Gastrocnemius medialis (tissue), 4 donors: ENCODE measurements at regions of chr7 and their contacts with region 1.

Region 1: GRCh38 chr7:142482891-142483658 is 225.2 kb upstream of the PRSS58 start:
- DNase-seq: no peak
- ATAC-seq: peak; percentile 49 to 50
- H3K4me3 ChIP-seq: no peak overlapping the region
- H3K27ac ChIP-seq: no peak overlapping the region
- H3K4me1 ChIP-seq: peaks cover 0 to 6% of the 10 kb centered on the region in 2 donors
- H3K27me3 ChIP-seq: no peaks in the 10 kb centered on the region
- CTCF ChIP-seq: peak in 4 of 5 experiments; percentile 39 to 73 (median 60)
- POLR2A ChIP-seq: no peak

Region 2: GRCh38 chr7:142357953-142358520 is 125.0 kb before region 1 on chr7:
- in situ Hi-C with region 1: loop called in 2 of 4 experiments (anchors 5 to 10 kb)
- intact Hi-C with region 1: loop called (anchors 10 kb)
- DNase-seq: peak in 1 of 2 donors; percentile 33
- ATAC-seq: peak; percentile 66 to 87
- H3K4me3 ChIP-seq: no peak overlapping the region
- H3K27ac ChIP-seq: peak overlapping the region in 1 of 4 donors; percentile 42
- H3K4me1 ChIP-seq: peaks cover 4 to 9% of the 10 kb centered on the region in 2 donors
- H3K27me3 ChIP-seq: no peaks in the 10 kb centered on the region
- CTCF ChIP-seq: peak; percentile 66 to 86 (median 77)
- POLR2A ChIP-seq: no peak

Region 3: GRCh38 chr7:142385491-142386340 is 97.4 kb before region 1 on chr7:
- in situ Hi-C with region 1: no loop called
- intact Hi-C with region 1: loop called (anchors 2 kb)
- DNase-seq: peak in 1 of 2 donors; percentile 41
- ATAC-seq: peak; percentile 67 to 82
- H3K4me3 ChIP-seq: no peak overlapping the region
- H3K27ac ChIP-seq: peak overlapping the region in 1 of 4 donors; percentile 70
- H3K4me1 ChIP-seq: peaks cover 12 to 27% of the 10 kb centered on the region in 2 donors
- H3K27me3 ChIP-seq: no peaks in the 10 kb centered on the region
- CTCF ChIP-seq: peak; percentile 56 to 71 (median 59)
- POLR2A ChIP-seq: no peak

Region 4: GRCh38 chr7:142459551-142459963 is 23.5 kb before region 1 on chr7:
- in situ Hi-C with region 1: no loop called
- intact Hi-C with region 1: loop called (anchors 2 kb)
- DNase-seq: no peak
- ATAC-seq: peak; percentile 67 to 80
- H3K4me3 ChIP-seq: no peak overlapping the region
- H3K27ac ChIP-seq: no peak overlapping the region
- H3K4me1 ChIP-seq: peaks cover 13 to 19% of the 10 kb centered on the region in 2 donors
- H3K27me3 ChIP-seq: no peaks in the 10 kb centered on the region
- CTCF ChIP-seq: peak; percentile 49 to 77 (median 63)
- POLR2A ChIP-seq: no peak

Region 5: GRCh38 chr7:142496545-142497041 is 13.5 kb after region 1 on chr7:
- in situ Hi-C with region 1: no loop called
- intact Hi-C with region 1: no loop called
- DNase-seq: no peak
- ATAC-seq: peak in 1 of 2 donors; percentile 70
- H3K4me3 ChIP-seq: peak overlapping the region in 1 of 4 donors; percentile 2
- H3K27ac ChIP-seq: no peak overlapping the region
- H3K4me1 ChIP-seq: peaks cover 5 to 11% of the 10 kb centered on the region in 2 donors
- H3K27me3 ChIP-seq: no peaks in the 10 kb centered on the region
- CTCF ChIP-seq: peak; percentile 44 to 79 (median 56)
- POLR2A ChIP-seq: no peak